HAP-1 (cell line): ENCODE measurements at regions of chr17 and their contacts with region 1.

Region 1: DNA sequence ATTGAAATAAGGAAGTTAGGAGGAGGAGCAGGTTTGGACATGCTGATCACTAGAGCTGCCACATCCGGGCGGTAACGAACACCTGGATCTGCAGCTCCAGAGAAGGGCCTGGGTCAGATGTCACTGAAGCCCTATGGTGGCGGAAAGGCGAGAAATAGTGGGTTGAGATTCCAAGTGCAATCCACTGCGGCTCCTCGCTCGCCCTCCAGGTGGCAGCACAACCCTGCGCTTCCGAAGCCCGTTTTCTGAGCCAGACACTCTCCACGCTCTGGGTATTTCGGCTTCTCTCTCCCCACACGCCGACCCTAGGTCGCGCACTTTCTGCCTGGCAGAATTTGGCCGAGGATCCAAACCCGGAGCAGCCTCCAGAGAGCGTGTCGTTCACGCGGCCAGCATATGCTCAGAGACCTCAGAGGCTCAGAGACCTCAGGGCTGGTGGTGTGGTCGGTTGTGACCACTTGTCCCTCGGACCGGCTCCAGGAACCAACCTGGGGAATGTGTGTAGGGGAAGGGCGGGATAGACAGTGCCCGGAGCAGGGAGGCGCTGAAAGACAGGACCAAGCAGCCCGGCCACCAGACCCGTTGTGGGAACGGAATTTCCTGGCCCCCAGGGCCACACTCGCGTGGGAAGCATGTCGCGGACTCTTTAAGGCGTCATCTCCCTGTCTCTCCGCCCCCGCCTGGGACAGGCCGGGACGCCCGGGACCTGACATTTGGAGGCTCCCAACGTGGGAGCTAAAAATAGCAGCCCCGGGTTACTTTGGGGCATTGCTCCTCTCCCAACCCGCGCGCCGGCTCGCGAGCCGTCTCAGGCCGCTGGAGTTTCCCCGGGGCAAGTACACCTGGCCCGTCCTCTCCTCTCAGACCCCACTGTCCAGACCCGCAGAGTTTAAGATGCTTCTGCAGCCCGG is 744 bp upstream of the SLC2A4 start:
- DNase-seq: peak; percentile 85 to 92
- H3K4me3 ChIP-seq: peak overlapping the region; percentile 75
- H3K4me1 ChIP-seq: peaks cover 8% of the 10 kb centered on the region
- H3K27me3 ChIP-seq: no peaks in the 10 kb centered on the region

Region 2: GRCh38 chr17:7348478-7349242 is 67.9 kb after region 1 on chr17:
- in situ Hi-C with region 1: loop called (anchors 5 kb)
- DNase-seq: no peak
- H3K4me3 ChIP-seq: no peak overlapping the region
- H3K4me1 ChIP-seq: no peaks in the 10 kb centered on the region
- H3K27me3 ChIP-seq: no peaks in the 10 kb centered on the region